PC-9 (cell line): ENCODE measurements at regions of chr12 and their contacts with region 1.

Region 1: DNA sequence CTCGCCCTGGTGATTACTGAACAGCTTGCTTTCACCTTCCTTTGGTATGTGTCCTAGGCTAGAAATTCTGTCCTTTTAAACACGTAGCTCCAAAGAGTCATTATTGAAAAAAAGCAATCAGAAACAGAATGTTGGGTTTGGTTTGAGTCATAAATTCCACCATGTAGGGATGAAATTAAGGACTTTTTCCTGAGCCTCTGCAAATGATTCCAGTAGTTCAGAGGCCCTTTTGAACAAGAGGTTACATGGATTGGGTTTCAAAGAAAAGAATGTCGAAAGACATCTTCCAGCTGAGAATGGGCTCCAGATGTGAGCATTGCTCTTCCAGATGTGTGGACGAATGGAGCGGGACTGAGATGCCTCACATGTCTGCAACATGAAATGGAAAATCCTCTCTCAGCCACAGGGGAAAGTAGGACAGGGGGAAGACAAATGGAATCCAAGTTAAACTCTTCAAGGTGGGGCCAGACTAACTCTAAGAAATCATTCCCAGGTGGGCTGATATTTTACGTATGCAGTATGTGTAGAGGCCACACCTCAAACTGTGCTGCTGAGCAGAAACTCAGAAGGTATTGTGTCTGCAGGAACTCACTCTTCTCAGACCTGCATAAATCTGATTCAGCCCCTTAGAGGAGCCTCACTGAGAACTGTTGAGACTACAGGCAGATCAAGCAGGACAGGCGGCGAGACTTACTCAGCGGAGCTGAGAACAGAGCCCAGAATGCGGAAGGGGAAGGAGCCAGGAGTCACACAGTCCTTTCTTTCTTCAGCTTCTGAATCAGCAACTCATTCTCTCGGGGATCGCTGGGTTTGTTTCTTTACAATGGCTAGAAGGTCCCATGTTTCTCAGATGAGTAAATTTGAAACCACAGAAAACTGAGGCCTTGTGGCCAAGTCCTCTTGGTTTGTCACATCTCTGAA is 23.3 kb upstream of the EMP1 start:
- DNase-seq: peak; percentile 93 to 97
- H3K4me3 ChIP-seq: peak overlapping the region; percentile 37; the same call in 1 of the 2 replicates
- H3K27ac ChIP-seq: peak overlapping the region; percentile 99
- H3K4me1 ChIP-seq: peaks cover 100% of the 10 kb centered on the region
- H3K27me3 ChIP-seq: no peaks in the 10 kb centered on the region
- CTCF ChIP-seq: no peak

Region 2: DNA sequence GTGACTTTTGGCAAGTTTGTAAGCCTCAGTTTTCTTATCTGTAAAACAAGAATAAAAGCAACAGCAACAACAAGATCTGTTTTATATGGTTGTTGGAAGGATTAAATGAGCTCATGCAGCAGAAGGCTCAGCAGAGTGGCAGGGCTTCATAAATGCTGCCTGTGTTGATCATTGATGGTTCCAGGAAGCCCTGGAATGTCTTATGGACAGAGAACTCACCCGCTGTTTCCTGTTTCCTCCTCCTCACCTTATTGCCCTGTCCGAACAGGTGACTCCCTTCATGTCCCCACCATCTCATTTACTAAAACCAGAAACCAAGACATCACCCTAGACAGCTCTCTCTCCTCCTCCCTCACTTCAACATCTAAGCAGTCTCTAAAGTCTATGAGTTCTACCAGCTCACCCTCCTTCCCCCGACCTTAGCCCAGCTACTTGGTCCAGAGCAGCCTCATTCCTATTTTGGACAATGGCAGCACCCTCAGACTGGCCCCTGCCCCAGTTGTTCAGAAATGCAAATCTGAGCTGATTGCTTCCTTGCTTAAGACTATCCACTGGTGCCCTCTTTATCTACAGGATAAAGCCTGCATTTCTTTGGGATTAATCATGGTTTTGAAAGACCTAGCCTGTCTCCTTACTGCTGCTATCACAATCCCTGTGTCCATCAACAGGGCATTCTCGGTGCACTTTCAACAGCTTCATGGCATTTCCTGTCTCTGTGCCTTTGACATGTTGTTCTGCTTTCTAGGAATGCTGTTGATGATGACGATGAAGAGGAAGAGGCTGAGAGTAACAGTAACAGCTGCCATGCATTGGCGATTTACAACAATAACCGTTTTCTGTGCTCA is 48.4 kb before region 1 on chr12:
- CTCF ChIA-PET with region 1: no interaction called
- POLR2A ChIA-PET with region 1: no interaction called
- intact Hi-C with region 1: loop called (anchors 1 kb)
- DNase-seq: peak; percentile 66 to 93
- H3K4me3 ChIP-seq: no peak overlapping the region
- H3K27ac ChIP-seq: peak overlapping the region; percentile 41
- H3K4me1 ChIP-seq: peaks cover 45% of the 10 kb centered on the region
- H3K27me3 ChIP-seq: no peaks in the 10 kb centered on the region
- CTCF ChIP-seq: no peak

Region 3: DNA sequence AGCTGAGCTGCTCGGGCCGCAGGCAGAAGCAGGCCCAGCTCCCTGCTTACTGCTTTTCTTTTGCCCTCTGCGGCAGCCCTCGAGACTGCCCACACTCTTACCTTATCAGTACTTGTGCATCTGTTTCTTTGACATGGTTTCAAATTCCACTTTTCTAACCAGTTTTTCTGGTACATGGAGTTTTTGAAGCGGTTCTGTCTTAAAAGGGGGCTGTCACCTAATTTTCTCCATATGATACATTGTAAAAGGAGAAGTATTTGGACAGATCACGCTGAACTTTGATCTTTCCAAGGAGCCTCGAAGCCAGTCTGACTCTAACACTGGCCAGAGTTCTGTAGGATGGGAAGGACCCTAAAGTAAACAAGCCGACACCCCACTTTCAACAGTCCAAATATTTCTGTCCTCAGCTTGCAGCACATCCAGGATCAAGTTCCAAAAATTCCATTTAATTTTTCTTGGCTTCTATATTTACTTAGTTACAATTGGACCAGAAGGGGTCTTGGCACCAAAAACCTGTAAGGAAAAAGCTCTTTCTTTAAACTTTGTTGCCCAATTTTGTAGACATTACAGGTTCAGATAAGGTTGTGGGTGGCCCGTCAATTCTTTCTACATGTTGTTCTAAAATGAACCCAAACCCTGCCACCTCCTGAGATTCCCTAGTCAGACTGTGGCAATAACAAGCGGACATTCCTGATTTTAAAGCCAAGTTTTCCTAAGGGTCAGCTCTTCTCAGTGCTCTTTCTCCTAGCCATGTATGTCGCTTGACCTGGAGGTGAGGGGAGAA is 25.0 kb before region 1 on chr12:
- CTCF ChIA-PET with region 1: interaction called, 4 read pairs
- POLR2A ChIA-PET with region 1: interaction called, 11 read pairs
- intact Hi-C with region 1: loop called (anchors 1 kb)
- DNase-seq: peak; percentile 68 to 84
- H3K4me3 ChIP-seq: no peak overlapping the region
- H3K27ac ChIP-seq: peak overlapping the region; percentile 43
- H3K4me1 ChIP-seq: peaks cover 38% of the 10 kb centered on the region
- H3K27me3 ChIP-seq: no peaks in the 10 kb centered on the region
- CTCF ChIP-seq: no peak

Region 4: GRCh38 chr12:13316587-13317246 is 143.4 kb after region 1 on chr12:
- CTCF ChIA-PET with region 1: no interaction called
- POLR2A ChIA-PET with region 1: no interaction called
- intact Hi-C with region 1: no loop called
- DNase-seq: no peak
- H3K4me3 ChIP-seq: no peak overlapping the region
- H3K27ac ChIP-seq: no peak overlapping the region
- H3K4me1 ChIP-seq: no peaks in the 10 kb centered on the region
- H3K27me3 ChIP-seq: no peaks in the 10 kb centered on the region
- CTCF ChIP-seq: no peak